ENCODE measurements at regions of chr2 and their contacts with region 1.

Region 1: GRCh38 chr2:237858294-237859081 is 935 bp upstream of the RAMP1 start:
- DNase-seq: no peak

Region 2: DNA sequence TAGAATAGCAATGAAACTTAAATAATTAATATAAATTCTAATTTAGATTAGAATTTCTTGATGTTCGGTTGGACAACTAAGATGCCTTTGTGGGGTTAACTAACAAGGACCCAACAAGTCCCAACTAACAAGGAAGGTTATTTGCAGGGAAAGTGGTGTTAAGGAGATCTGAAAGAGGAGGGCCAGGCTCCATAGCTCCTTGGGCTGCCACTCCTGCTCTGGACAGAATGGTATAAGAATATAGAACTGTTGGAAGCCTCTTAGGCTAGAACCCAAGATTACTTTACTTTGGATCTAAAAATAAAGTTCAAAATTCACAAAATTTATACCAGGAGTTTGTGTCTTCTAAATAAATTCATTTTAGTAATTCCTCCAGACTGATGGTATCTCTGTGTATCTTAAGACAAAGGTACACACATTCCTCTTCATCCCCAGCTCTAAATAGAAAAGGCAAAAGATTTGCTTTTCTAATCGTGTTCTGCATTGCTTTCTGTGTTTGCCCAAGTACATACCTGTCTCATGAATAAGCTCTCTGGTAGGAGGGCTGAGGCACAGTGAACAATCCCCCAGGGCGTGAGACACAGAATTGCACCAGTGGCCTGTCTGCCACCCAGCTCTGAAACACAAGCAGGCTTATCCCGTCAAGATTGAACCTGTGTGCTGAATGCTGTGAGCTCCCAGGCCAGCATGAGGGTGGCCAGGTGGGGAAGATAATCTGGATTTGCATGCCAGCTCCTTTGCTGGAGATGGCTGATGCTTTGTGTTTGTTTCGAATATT is 1112.9 kb before region 1 on chr2:
- intact Hi-C with region 1: no loop called
- DNase-seq: no peak

Region 3: DNA sequence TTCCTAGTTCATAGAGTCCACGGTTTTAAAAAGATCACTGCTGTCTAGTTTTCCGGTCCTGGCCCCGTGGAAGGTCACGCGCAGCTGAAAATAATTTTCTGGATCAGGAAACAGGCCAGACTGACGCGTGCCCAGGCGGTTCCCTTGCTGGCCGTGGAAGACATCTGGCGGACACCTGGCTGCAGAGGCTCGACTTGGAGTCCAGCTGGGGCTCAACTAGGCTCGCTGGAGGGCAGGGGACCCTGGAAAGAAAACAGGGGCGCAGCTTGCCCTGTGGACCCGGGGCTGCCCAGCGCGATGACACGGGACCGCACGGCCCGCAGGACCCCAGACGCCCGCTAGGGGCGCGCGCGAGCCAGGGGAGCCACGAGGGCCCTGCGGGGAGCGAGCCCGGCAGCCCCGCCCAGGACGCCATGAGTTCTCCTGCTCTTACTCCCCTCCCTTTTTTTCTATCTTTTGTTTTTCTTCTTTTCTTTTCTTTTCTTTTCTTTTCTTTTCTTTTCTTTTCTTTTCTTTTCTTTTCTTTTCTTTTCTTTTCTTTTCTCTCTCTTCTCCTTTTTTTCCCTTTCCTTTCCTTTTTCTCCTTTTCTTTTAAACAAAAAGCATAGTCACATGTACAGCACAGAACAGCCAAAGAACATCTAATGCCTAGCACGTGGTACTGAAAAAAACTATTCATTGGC is 65.1 kb after region 1 on chr2:
- intact Hi-C with region 1: loop called in 1 of 2 experiments (anchors 2 kb)
- DNase-seq: peak; percentile 95

Region 4: GRCh38 chr2:238263204-238264071 is 404.9 kb after region 1 on chr2:
- intact Hi-C with region 1: loop called in 1 of 2 experiments (anchors 5 kb)
- DNase-seq: peak; percentile 98